ENCODE measurements at regions of chr9 and their contacts with region 1.

Region 1: GRCh38 chr9:36407122-36407723 is 7.2 kb upstream of the RNF38 start:
- DNase-seq: peak; percentile 44
- ATAC-seq: peak; percentile 90

Region 2: DNA sequence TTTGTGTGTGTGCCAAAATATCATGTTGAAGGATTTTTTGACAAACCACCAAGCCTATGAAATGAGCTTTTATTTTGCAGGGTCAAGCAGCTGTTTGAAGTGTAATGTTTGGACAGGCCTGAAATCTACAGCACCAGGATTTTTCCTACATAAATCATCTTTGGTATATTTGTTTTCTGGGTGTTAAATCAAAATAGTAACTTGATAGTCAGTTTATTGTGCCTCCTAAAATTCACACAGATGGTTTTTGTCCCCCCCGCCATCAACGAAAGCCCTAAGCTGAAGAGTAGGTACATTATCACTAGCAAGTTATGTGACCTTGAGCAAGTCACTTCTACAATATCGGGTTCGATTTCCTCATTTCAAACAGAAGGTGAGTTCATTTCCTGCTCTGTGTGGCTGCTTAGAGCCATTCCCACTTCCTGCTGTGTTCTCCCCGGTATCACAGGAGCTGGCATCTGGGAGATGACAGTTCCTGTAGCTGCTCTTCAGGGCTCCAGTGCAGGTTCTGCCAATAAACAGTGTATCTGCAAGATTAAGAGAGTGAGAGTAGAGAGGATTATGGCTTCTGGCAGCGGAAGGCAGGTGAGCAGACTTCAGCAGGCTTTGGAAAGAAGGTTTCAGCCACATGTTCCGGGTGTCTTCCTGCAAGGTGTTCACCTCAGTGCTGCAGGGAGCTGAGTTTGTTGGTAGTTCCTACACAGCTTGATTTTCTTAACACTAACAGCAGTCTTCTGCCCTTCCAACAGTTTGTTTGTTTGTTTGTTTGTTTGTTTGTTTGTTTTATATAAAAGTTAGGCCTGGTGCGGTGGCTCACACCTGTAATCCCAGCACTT is 100.5 kb before region 1 on chr9:
- intact Hi-C with region 1: no loop called
- DNase-seq: no peak
- ATAC-seq: no peak

Region 3: DNA sequence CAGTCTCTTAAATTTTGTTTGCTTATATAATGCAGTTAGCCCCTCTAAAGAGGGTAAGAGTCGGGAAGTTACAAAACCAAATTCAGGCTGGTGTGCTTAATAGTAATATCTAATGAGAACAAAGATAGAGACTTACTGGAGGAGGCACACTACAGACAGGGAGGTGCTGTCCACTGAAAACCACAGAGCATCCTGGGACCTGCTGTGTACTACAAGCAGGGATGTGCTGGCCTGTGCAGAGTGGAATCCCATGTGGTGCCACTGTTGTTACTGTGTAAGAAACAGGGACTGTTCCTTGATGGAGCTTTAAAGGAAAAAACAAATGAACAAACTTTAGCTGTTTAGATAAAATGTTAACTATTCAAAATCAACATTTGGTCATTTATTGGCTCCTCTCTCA is 49.6 kb before region 1 on chr9:
- intact Hi-C with region 1: no loop called
- DNase-seq: no peak
- ATAC-seq: no peak

Region 4: DNA sequence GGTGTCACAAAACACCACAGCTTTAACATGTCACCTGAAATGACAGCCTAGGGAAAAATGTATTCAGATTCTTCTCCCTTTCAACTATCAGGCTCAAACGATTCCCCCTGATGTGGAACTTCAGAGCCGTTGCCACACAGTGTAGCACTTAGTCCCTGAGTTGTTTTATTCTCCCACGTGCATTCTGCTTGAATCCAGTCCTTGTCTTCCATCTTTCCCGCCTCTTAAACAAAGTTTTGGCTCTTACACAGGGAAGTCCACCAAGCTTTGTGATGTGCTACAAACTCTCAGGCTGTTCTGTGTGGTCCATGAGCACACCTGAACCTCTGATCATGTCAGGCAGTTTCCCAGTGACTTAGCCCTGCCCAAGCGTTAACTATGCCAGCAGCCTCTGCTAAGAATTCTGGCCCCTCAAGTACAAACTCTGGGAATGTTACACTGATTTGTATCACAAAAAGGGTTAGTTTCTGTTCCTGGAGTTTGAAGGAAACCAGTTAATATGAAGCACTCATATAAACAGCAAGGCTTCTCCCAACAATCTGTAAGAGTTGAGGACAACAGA is 38.7 kb after region 1 on chr9:
- intact Hi-C with region 1: loop called (anchors 5 kb)
- DNase-seq: no peak
- ATAC-seq: no peak

Region 5: DNA sequence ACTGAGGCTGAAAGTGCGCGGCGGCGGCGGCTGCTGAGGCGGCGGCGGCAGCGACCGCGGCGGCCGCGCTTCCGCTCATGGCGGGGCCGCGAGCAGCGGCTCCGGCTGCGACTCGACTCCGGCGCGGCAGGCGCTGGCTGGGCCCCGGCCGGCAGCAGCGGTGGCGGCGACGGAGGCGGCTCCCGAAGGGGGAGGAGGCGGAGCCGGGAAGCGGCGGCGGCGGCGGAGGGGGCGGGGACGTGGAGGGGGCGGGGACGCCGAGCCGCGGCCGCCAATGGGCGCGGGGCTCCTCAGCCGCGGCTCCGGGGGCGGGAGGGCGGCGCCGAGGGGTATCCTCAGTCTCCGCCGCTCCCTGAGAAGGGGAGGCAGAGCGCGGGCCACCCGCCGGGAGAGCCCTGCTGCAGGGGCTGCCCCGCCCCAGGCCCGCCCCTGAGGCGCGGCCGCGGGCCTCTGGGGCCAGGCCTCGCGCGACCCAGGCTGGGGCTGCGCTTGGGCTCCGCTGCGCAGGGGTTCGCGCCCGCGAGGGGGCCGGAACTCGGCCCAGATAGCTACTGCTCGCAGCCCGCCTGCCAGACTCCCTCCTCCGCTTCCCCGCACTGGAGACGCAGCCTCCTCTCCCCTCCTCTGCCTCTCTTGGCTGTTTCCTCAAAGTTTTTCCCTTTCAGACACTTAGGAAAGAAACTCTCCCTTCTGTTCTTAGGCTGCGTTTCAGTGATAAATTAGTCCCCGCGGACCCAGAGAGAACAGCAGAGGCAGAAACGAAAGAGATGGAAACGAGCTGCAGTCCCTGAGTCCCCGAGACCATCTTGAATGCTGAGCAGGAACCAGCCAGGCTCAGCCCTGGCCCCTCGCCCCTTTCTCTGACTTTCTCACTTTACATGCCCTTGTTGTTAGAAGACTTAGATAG is 80.5 kb after region 1 on chr9:
- intact Hi-C with region 1: loop called (anchors 5 kb)
- DNase-seq: peak; percentile 95
- ATAC-seq: peak; percentile 98

Region 6: DNA sequence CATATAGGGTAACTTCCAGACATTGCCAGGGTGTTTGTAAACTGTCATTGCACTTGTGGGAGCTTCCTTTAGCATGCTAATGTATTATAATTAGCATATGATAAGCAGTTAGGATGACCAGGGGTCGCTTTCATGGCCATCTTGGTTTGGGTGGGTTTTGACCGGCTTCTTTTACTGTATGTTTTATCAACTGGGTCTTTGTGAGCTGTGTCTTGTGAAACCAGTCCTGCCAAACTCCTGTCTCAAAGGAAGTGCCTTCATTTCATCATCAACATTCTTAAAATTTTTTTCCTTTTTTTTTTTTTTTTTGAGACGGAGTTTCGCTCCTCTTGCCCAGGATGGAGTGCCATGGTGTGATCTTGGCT is 153.6 kb after region 1 on chr9:
- intact Hi-C with region 1: loop called (anchors 2 kb)
- DNase-seq: no peak
- ATAC-seq: no peak

Measured in Right ventricle myocardium superior (tissue), 1 donor.